Activated T-helper 2 cell treated with anti-CD3 and anti-CD28 coated beads, Interferon-gamma antibody, Interleukin-2, Interleukin-4, amounts not matched to agents 10 μg/mL and 5 μg/mL and 100 μg/mL, durations not matched to agents 14 hours and 24 hours and 36 hours (primary cell): ENCODE measurements at regions of chr3 and their contacts with region 1.

Region 1: GRCh38 chr3:23202921-23203707 is at the start of gene UBE2E2:
- DNase-seq: peak; percentile 45
- H3K4me3 Mint-ChIP-seq: peak within 1 kb of the TSS; percentile 93
- H3K27ac Mint-ChIP-seq: peak within 1 kb of the TSS; percentile 76
- H3K4me1 Mint-ChIP-seq: peaks cover 21% of the 10 kb centered on the region
- H3K27me3 Mint-ChIP-seq: peaks cover 42% of the 10 kb centered on the region
- total RNA-seq, gene UBE2E2: 6.3 and 7.5 TPM in 2 replicates

Region 2: GRCh38 chr3:23435318-23435717 is 232.2 kb after region 1 on chr3:
- intact Hi-C with region 1: loop called (anchors 10 kb)
- DNase-seq: no peak
- H3K4me3 Mint-ChIP-seq: no peak overlapping the region
- H3K27ac Mint-ChIP-seq: no peak overlapping the region
- H3K4me1 Mint-ChIP-seq: peaks cover 19% of the 10 kb centered on the region
- H3K27me3 Mint-ChIP-seq: peaks cover 31% of the 10 kb centered on the region